ENCODE measurements at regions of chr2 and their contacts with region 1.

Region 1: DNA sequence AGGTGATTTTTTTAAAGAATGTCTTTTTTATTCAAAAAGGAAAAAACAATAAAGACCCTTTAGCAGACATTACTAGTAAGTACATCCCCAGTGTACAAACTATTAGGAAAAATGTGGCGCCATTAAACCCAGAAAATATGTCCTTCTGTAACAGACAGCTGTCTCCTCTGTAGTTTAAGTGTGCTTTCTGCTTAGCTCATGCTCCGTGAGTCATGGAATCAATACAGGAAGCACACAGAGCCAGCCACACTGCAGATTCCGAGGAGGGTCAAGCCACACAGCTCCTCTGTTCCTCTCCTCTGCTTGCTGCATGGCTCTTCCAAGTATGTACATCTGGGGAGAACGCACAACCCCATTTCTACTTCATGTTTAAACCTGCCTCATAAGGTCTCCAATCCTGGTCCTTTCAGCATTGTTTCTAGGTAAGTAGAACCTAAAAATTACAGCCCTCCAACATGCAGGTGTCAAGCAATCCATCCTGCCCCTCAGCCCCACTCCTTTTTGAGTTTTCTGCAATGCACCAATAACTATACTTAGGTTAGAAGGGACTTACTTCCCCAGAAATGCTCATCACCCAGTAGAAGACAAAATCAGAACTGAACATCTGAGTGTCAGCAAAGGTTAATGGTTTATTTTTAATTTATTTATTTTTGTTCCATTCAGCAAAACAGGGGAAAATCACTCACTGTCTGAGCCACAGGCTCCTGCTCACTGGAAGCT is 37.5 kb downstream of the ACVR1 start:
- DNase-seq: no peak
- ATAC-seq: peak; percentile 80

Region 2: DNA sequence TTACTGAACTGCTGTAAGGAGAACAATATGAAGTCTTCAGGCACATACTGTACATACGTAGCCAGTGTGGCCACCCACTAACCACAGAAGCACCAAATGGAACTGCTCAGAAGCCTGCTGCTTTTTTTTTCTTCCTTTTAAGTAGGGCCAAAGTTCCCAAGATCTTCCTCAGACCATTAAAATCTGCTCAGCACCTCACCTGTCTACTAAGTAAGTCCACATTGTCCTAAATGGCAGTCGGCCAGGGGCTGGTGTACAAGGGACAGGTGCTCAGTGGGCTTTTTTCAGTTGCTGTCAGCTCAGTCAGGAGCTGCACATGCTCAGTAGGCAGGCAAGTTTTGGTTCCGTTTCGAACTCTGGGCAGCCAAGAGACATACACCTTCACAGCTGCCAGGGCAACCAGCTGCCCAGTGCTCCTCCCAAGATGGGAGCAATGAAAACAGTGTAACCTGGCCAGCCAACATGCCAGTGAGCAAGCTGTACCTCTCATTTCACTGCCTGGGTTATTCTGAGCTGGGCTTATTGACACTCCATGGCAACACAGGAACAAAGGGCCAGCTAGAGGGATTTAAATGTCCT is 48.6 kb before region 1 on chr2:
- intact Hi-C with region 1: loop called (anchors 1 kb)
- DNase-seq: peak; percentile 51
- ATAC-seq: peak; percentile 93

Region 3: DNA sequence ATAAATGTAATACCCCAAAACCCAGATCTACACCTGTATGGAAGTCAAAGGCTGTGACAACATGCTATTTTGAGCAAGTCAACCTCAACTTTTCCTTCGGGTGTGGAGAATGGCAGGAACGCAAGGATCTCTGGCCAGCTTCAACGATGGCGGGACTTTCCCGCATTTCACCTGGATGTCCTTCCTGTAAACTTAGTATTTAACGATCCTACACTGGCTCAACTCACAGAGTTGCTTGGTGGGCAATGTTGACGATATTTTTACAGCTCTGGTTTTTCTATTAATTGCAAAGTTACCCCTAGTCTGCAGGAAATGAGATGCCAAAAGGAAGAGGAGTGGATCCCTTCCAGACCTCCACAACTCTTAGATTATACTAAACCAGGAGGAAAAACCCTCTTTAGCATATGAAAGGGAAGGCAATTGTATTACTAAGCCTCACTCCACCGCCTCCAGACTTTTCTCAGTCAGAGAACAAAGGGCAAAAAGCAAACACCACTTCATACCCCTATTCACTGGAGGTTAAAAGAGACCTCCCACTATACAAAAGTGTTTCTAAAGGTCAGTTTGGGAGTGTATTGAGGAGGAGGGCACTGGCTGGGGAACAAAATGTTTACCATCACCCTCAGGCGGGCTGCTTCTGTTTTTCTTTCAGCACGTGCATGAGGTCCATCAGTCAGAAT is 94.0 kb after region 1 on chr2:
- intact Hi-C with region 1: loop called (anchors 5 kb)
- DNase-seq: no peak
- ATAC-seq: no peak